CD8-positive, alpha-beta memory T cell (primary cell): ENCODE measurements at regions of chr7 and their contacts with region 1.

Region 1: GRCh38 chr7:42911454-42912447 is at the start of gene C7orf25:
- DNase-seq: peak; percentile 93 to 97 (median 96)
- H3K4me3 ChIP-seq: peak within 1 kb of the TSS; percentile 68
- H3K4me3 Mint-ChIP-seq: peak within 1 kb of the TSS; percentile 91 to 97 (median 92)
- H3K27ac ChIP-seq: peak within 1 kb of the TSS; percentile 53
- H3K27ac Mint-ChIP-seq: peak within 1 kb of the TSS; percentile 88 to 98 (median 94)
- H3K4me1 ChIP-seq: peaks cover 34% of the 10 kb centered on the region
- H3K4me1 Mint-ChIP-seq: peaks cover 24 to 54% (median 45%) of the 10 kb centered on the region in 3 donors
- H3K27me3 ChIP-seq: no peaks in the 10 kb centered on the region
- H3K27me3 Mint-ChIP-seq: no peaks in the 10 kb centered on the region
- total RNA-seq, gene C7orf25: 2.5 to 5.2 TPM

Region 2: DNA sequence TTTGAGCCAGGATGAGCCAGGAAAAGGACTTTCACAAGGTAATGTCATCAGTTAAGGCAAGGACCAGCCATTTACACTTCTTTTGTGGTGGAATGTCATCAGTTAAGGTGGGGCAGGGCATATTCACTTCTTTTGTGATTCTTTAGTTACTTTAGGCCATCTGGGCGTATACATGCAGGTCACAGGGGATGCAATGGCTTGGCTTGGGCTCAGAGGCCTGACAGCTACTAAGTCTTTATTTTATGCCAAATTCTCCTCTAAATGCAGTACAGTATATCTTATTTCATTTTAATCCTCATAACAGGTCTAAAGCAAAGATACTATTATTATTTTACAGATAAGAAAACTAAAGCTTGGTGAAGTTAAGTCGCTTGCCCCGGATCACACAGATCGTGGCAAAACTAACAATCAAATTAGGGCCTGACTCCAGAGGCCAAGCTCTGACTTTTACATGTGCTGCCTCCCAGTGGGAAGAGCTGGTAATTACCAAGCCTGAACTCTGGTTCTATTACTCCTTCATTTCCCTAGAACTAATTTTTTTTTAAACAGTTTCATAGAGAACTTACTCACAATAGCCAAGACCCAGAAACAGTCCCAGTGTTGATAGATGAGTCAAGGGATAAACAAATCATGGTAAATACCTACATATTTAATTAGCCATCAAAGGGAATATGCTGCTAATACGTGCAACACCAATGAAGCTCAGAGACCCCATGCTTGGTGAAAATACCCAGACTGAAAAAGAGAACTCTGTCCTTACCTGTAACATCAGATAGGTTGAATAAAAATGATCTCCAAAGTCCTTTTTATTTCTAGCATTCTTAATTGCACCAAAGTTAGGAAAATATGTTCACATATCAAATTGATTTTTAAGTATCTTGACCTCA is 35.3 kb before region 1 on chr7:
- CTCF ChIA-PET with region 1: no interaction called
- POLR2A ChIA-PET with region 1: no interaction called
- DNase-seq: peak in 1 of 5 donors; percentile 16
- H3K4me3 ChIP-seq: no peak overlapping the region
- H3K4me3 Mint-ChIP-seq: no peak overlapping the region
- H3K27ac ChIP-seq: no peak overlapping the region
- H3K27ac Mint-ChIP-seq: no peak overlapping the region
- H3K4me1 ChIP-seq: no peaks in the 10 kb centered on the region
- H3K4me1 Mint-ChIP-seq: no peaks in the 10 kb centered on the region
- H3K27me3 ChIP-seq: no peaks in the 10 kb centered on the region
- H3K27me3 Mint-ChIP-seq: peaks cover 8 to 13% of the 10 kb centered on the region in 2 donors

Region 3: GRCh38 chr7:42931834-42932651 is 20.3 kb after region 1 on chr7 and contains the starts of genes MRPL32 and PSMA2:
- CTCF ChIA-PET with region 1: interaction called, 7 read pairs
- POLR2A ChIA-PET with region 1: interaction called, 17 read pairs
- DNase-seq: peak; percentile 91 to 97 (median 94)
- H3K4me3 ChIP-seq: peak within 1 kb of the TSS; percentile 98
- H3K4me3 Mint-ChIP-seq: peak within 1 kb of the TSS; percentile 95 to 100 (median 99)
- H3K27ac ChIP-seq: peak within 1 kb of the TSS; percentile 88
- H3K27ac Mint-ChIP-seq: peak within 1 kb of the TSS; percentile 83 to 100 (median 98)
- H3K4me1 ChIP-seq: peaks cover 49% of the 10 kb centered on the region
- H3K4me1 Mint-ChIP-seq: peaks cover 65 to 87% (median 80%) of the 10 kb centered on the region in 3 donors
- H3K27me3 ChIP-seq: no peaks in the 10 kb centered on the region
- H3K27me3 Mint-ChIP-seq: no peaks in the 10 kb centered on the region
- total RNA-seq, gene MRPL32: 74.6 to 79.5 TPM
- total RNA-seq, gene PSMA2: 176 to 179 TPM